H1 (cell line): ENCODE measurements at regions of chr11 and their contacts with region 1.

Region 1: GRCh38 chr11:90288212-90288821 is 65.5 kb upstream of the CHORDC1 start:
- DNase-seq: no peak
- H3K4me3 ChIP-seq: no peak overlapping the region
- H3K27ac ChIP-seq: no peak overlapping the region
- H3K4me1 ChIP-seq: no peaks in the 10 kb centered on the region
- H3K27me3 ChIP-seq: no peaks in the 10 kb centered on the region
- CTCF ChIP-seq: peak in 2 of 3 experiments; percentile 61 to 76; a peak in 3 of 4 replicates
- EP300 ChIP-seq: no peak
- POLR2A ChIP-seq: no peak
- RAD21 ChIP-seq: peak; percentile 77 to 81

Region 2: DNA sequence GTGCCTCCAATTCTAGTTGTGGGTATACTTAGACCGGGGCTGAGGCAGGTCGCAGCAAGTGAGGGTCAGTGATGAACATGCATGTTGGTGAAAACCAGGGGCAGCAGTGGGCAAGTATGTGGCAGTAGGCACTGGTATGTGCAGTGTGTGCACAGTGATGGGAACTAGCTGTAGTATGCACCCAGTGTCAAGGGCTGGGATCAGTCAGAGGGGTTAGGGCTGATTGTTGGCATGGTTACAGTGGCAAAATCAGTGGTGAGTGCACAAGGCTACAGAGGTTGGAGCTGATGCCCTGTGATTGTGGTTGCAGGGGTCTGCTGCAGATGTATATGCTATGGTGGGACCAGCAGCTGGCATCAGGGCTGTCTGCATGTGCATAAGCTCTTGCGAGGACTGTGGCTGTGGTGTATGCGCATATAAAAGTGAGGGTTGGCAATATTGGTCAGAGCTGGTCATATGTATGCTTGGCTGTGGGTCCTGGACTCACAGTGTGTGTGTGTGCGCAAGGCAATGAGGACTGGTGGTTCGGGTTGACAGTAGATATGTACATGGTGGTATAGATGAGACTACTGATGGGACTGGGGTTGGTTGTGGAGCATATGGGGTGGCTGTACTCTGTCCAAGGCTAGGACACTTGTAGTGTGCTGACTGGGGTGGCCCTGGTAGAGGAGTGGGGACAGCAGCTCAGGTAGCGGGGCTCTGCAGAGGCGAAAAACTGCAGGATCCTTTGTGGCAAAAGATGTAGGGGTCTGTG is 31.7 kb before region 1 on chr11:
- CTCF ChIA-PET with region 1: interaction called, 11 read pairs
- POLR2A ChIA-PET with region 1: interaction called, 3 read pairs
- DNase-seq: no peak
- H3K4me3 ChIP-seq: no peak overlapping the region
- H3K27ac ChIP-seq: no peak overlapping the region
- H3K4me1 ChIP-seq: no peaks in the 10 kb centered on the region
- H3K27me3 ChIP-seq: no peaks in the 10 kb centered on the region
- CTCF ChIP-seq: no peak
- EP300 ChIP-seq: no peak
- POLR2A ChIP-seq: no peak
- RAD21 ChIP-seq: no peak

Region 3: DNA sequence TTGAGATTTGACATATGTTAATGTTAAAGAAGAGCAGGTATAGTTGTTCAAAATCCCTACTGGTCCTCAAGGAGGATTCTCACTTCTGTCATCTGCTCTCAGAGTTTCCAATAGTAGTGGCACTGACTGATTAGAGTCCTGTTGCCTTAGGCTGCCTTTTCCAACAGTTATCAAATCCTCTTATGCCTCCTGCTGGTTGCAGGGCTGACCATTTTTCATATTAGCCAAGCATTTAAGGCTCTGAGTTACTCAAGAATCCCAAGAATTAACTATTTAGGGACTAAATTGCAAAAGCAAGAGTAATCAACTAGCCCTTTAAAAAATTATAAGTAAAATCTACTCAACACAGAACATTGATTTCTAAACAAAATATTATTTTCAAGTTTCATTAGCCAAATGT is 146.5 kb after region 1 on chr11:
- CTCF ChIA-PET with region 1: interaction called, 21 read pairs
- POLR2A ChIA-PET with region 1: no interaction called
- DNase-seq: no peak
- H3K4me3 ChIP-seq: no peak overlapping the region
- H3K27ac ChIP-seq: no peak overlapping the region
- H3K4me1 ChIP-seq: peaks cover 0 to 23% (median 10%) of the 10 kb centered on the region in 4 experiments; a peak in 3 of 7 replicates
- H3K27me3 ChIP-seq: no peaks in the 10 kb centered on the region
- CTCF ChIP-seq: peak in 2 of 3 experiments; percentile 23 to 28; a peak in 2 of 4 replicates
- EP300 ChIP-seq: no peak
- POLR2A ChIP-seq: no peak
- RAD21 ChIP-seq: peak; percentile 58 to 62

Region 4: GRCh38 chr11:90465507-90465906 is 177.2 kb after region 1 on chr11:
- CTCF ChIA-PET with region 1: interaction called, 39 read pairs
- POLR2A ChIA-PET with region 1: no interaction called
- DNase-seq: no peak
- H3K4me3 ChIP-seq: no peak overlapping the region
- H3K27ac ChIP-seq: no peak overlapping the region
- H3K4me1 ChIP-seq: no peaks in the 10 kb centered on the region; a peak in 1 of 7 replicates
- H3K27me3 ChIP-seq: no peaks in the 10 kb centered on the region
- CTCF ChIP-seq: no peak
- EP300 ChIP-seq: no peak
- POLR2A ChIP-seq: no peak
- RAD21 ChIP-seq: no peak

Region 5: GRCh38 chr11:90585491-90585890 is 297.2 kb after region 1 on chr11:
- CTCF ChIA-PET with region 1: no interaction called
- POLR2A ChIA-PET with region 1: no interaction called
- DNase-seq: no peak
- H3K4me3 ChIP-seq: no peak overlapping the region
- H3K27ac ChIP-seq: no peak overlapping the region
- H3K4me1 ChIP-seq: peaks cover 0 to 6% (median 0%) of the 10 kb centered on the region in 4 experiments; a peak in 1 of 7 replicates
- H3K27me3 ChIP-seq: no peaks in the 10 kb centered on the region
- CTCF ChIP-seq: no peak
- EP300 ChIP-seq: no peak
- POLR2A ChIP-seq: no peak
- RAD21 ChIP-seq: no peak